Natural killer cell (primary cell): ENCODE measurements at regions of chr9 and their contacts with region 1.

Region 1: GRCh38 chr9:25366906-25367305 is 311.3 kb downstream of the TUSC1 start:
- DNase-seq: no peak
- ATAC-seq: no peak
- H3K4me3 ChIP-seq: no peak overlapping the region
- H3K4me3 Mint-ChIP-seq: no peak overlapping the region
- H3K27ac ChIP-seq: no peak overlapping the region
- H3K27ac Mint-ChIP-seq: no peak overlapping the region
- H3K4me1 ChIP-seq: no peaks in the 10 kb centered on the region
- H3K4me1 Mint-ChIP-seq: no peaks in the 10 kb centered on the region
- H3K27me3 ChIP-seq: no peaks in the 10 kb centered on the region
- H3K27me3 Mint-ChIP-seq: no peaks in the 10 kb centered on the region
- CTCF ChIP-seq: no peak

Region 2: GRCh38 chr9:25322143-25322542 is 44.8 kb before region 1 on chr9:
- intact Hi-C with region 1: no loop called
- DNase-seq: no peak
- ATAC-seq: no peak
- H3K4me3 ChIP-seq: no peak overlapping the region
- H3K4me3 Mint-ChIP-seq: no peak overlapping the region
- H3K27ac ChIP-seq: no peak overlapping the region
- H3K27ac Mint-ChIP-seq: no peak overlapping the region
- H3K4me1 ChIP-seq: no peaks in the 10 kb centered on the region
- H3K4me1 Mint-ChIP-seq: no peaks in the 10 kb centered on the region
- H3K27me3 ChIP-seq: no peaks in the 10 kb centered on the region
- H3K27me3 Mint-ChIP-seq: no peaks in the 10 kb centered on the region
- CTCF ChIP-seq: no peak

Region 3: DNA sequence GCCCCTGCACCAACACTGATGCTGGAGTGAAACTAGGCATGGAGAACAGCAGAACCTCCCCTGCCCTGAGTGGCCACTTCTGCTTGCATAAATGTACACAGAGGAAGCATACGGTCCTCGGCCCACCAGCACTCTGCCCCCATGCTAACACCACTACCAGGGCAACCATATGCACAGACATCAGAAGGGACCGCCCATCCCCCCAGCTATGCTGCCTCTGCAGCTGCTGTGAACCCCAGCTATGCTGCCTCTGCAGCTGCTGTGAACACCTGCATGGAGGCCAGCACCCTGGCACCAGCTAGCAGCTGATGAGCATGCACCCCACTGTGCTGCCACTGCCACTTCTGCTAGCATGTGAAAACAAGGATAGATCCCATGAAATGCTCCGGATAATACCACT is 61.0 kb after region 1 on chr9:
- intact Hi-C with region 1: loop called (anchors 10 kb)
- DNase-seq: no peak
- ATAC-seq: no peak
- H3K4me3 ChIP-seq: no peak overlapping the region
- H3K4me3 Mint-ChIP-seq: no peak overlapping the region
- H3K27ac ChIP-seq: no peak overlapping the region
- H3K27ac Mint-ChIP-seq: no peak overlapping the region
- H3K4me1 ChIP-seq: no peaks in the 10 kb centered on the region
- H3K4me1 Mint-ChIP-seq: no peaks in the 10 kb centered on the region
- H3K27me3 ChIP-seq: no peaks in the 10 kb centered on the region
- H3K27me3 Mint-ChIP-seq: no peaks in the 10 kb centered on the region
- CTCF ChIP-seq: no peak